Endothelial cell of umbilical vein (primary cell): ENCODE measurements at regions of chr4 and their contacts with region 1.

Region 1: DNA sequence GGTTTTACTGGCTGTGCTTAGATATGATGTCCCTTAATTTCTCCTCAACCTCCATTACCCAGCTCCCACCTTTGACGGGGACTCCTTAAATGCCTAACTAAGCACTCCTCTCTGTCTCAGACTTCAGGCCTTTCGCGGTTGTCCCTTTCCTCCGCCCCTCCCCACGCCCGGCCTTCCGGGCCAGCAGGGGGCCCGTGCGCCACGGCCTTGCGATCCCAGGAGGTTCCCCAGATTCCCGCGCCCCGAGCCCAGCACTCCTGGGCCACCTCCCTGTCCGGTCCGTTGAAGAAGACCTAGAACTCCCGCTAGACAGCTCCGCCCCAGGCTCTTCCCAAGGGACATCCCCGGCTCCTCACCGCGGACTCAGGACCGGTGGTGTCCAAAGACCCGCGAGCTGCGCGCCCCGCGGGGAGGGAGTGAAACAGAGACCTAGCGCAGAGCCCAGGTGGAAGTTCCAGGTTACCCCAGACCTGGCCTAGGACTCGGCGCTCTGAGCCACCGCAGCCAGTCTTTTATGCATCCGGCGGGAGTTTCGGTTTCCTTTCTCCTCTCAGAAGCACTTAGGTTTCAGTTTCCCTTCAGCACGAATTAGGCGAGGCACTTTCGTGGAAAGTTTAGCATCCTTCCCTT is at the start of gene DDX60:
- DNase-seq: peak; percentile 75
- H3K4me3 ChIP-seq: peak within 1 kb of the TSS; percentile 73 to 98 (median 97)
- H3K27ac ChIP-seq: peak within 1 kb of the TSS; percentile 92
- H3K4me1 ChIP-seq: peaks cover 4% of the 10 kb centered on the region
- H3K27me3 ChIP-seq: no peaks in the 10 kb centered on the region
- CTCF ChIP-seq: peak; percentile 48 to 61
- POLR2A ChIP-seq: peak; percentile 26
- total RNA-seq, gene DDX60: 7.9 and 9.3 TPM in 2 replicates

Region 2: DNA sequence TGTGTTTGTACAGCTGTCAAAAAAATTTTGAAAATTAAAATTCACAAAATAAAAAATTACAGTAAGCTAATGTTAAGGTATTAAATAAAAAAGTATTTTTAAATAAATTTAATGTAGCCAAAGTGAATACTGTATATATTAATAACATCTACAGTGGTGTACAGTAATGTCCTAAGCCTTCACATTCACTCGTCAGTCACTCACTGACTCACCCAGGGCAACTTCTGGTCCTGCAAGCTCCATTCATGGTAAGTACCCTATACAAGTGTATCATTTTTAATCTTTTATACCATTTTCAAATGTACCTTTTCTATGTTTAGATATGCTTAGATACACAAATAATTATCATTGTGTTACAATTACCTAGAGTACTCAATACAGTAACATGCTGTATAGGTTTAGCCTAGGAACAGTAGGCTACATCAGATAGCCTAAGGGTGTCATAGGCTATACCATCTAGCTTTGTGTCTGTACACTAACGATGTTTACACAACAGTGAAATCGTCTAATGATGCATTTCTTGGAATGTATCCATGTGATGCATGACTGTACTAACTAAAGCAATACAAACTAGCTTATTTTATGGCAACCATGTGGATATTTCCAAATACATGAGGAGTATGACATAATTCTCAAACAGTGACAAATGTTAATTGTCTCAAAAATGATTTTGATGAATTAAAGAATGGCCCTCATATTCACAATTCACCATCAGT is 13.5 kb before region 1 on chr4:
- CTCF ChIA-PET with region 1: interaction called, 10 read pairs
- POLR2A ChIA-PET with region 1: no interaction called
- dilution Hi-C with region 1: no loop called
- intact Hi-C with region 1: no loop called
- DNase-seq: peak; percentile 39
- H3K4me3 ChIP-seq: no peak overlapping the region
- H3K27ac ChIP-seq: no peak overlapping the region
- H3K4me1 ChIP-seq: no peaks in the 10 kb centered on the region
- H3K27me3 ChIP-seq: no peaks in the 10 kb centered on the region
- CTCF ChIP-seq: no peak
- POLR2A ChIP-seq: no peak

Region 3: DNA sequence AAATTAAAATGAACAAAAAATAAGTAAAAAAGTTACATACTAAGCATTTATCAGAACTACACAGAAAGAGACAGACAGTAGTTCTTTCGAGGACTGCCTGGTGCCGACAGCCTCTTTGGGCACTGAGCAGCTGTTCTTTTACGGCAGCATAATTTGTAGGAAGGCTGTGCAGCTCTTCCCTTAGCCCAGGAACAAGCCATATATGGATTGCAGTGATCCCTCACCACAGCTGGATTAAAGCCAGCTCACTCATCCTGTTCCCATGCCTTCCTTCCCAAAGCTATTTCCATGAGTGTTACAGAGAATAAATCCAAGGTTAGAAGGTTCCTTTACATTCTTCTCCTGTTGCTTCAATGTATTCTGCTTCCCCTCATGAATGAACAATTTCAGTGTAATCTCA is 90.2 kb after region 1 on chr4:
- CTCF ChIA-PET with region 1: interaction called, 3 read pairs
- POLR2A ChIA-PET with region 1: no interaction called
- dilution Hi-C with region 1: no loop called
- intact Hi-C with region 1: loop called (anchors 2 kb)
- DNase-seq: peak; percentile 97
- H3K4me3 ChIP-seq: no peak overlapping the region
- H3K27ac ChIP-seq: peak overlapping the region; percentile 72
- H3K4me1 ChIP-seq: peaks cover 28% of the 10 kb centered on the region
- H3K27me3 ChIP-seq: no peaks in the 10 kb centered on the region
- CTCF ChIP-seq: no peak
- POLR2A ChIP-seq: peak; percentile 47

Region 4: DNA sequence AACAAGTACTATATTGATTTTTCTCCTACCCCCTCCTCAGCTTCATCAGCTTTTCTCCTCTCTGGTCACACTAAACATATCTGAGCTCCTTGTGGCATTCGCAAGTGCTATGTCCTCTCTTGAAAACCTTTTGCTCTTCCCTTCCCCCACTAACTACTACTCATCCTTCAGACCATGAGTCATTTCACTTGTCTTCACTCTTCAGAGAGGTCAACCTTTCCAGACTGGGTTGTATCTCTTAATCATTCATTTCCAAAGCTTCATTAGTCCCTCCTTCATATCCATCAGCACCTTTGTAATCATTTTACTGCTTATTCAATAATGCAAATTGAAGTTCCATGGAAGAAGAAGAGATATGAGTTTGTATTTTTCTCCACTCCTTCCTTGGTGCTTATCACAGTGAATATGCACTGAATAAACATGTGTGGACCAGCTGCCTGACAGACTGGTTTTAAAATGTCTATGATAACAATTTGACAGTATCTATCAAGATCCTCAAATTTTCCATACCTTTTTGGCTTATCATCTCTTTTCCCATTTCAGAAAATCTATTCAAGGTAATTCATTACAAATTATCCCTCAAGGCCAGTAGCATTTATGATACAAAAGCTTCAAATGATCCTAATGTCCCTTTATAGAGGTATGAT is 133.5 kb after region 1 on chr4:
- CTCF ChIA-PET with region 1: no interaction called
- POLR2A ChIA-PET with region 1: no interaction called
- dilution Hi-C with region 1: no loop called
- intact Hi-C with region 1: no loop called
- DNase-seq: peak; percentile 76
- H3K4me3 ChIP-seq: no peak overlapping the region
- H3K27ac ChIP-seq: peak overlapping the region; percentile 61
- H3K4me1 ChIP-seq: peaks cover 22% of the 10 kb centered on the region
- H3K27me3 ChIP-seq: no peaks in the 10 kb centered on the region
- CTCF ChIP-seq: no peak
- POLR2A ChIP-seq: no peak

Region 5: DNA sequence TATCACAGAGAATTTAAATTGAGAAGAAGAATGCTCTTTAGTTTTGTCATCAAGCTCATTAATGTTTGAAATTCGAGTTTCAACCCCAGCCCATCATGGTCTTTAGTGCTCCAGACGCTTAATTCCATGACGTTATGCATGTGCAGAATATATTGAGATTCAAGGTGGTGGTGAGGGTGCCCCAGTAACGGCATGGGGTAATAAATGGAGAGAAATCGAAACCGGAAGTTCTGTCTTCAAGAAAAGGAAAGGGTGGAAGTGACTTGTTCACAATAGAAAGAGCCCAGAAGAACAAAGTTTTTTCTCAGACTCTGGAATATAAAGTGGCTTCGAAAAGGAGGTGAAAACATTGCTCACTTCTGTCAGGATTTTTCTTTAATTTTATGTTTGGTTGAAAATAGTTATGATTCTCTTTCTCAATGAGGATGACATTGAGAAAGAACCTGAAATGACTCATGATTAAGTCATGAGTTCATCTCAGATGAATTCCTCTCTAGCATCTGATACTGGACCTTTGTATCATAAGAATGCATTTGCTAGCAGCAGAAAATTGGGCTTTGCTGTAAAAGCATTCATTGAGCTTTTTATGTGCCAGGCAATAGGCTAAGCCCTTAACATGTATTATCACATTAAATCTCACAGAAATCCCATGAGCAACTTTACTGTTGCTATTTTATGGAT is 162.7 kb after region 1 on chr4:
- CTCF ChIA-PET with region 1: interaction called, 8 read pairs
- POLR2A ChIA-PET with region 1: interaction called, 3 read pairs
- dilution Hi-C with region 1: no loop called
- intact Hi-C with region 1: loop called (anchors 1 kb)
- DNase-seq: peak; percentile 88
- H3K4me3 ChIP-seq: peak overlapping the region; percentile 64 to 99 (median 90)
- H3K27ac ChIP-seq: peak overlapping the region; percentile 97
- H3K4me1 ChIP-seq: peaks cover 29% of the 10 kb centered on the region
- H3K27me3 ChIP-seq: no peaks in the 10 kb centered on the region
- CTCF ChIP-seq: no peak
- POLR2A ChIP-seq: no peak

Region 6: GRCh38 chr4:168551945-168552695 is 233.7 kb after region 1 on chr4:
- CTCF ChIA-PET with region 1: no interaction called
- POLR2A ChIA-PET with region 1: no interaction called
- dilution Hi-C with region 1: no loop called
- intact Hi-C with region 1: loop called (anchors 2 kb)
- DNase-seq: peak; percentile 61
- H3K4me3 ChIP-seq: no peak overlapping the region
- H3K27ac ChIP-seq: no peak overlapping the region
- H3K4me1 ChIP-seq: peaks cover 15% of the 10 kb centered on the region
- H3K27me3 ChIP-seq: no peaks in the 10 kb centered on the region
- CTCF ChIP-seq: no peak
- POLR2A ChIP-seq: no peak